Activated naive CD4-positive, alpha-beta T cell treated with anti-CD3 and anti-CD28 coated beads for 36 hours (primary cell): ENCODE measurements at regions of chrX and their contacts with region 1.

Region 1: GRCh38 chrX:124018023-124018422 is 56.5 kb downstream of the STAG2 start:
- DNase-seq: no peak
- H3K4me3 Mint-ChIP-seq: no peak overlapping the region
- H3K27ac Mint-ChIP-seq: no peak overlapping the region
- H3K4me1 Mint-ChIP-seq: peaks cover 30% of the 10 kb centered on the region
- H3K27me3 Mint-ChIP-seq: no peaks in the 10 kb centered on the region

Region 2: DNA sequence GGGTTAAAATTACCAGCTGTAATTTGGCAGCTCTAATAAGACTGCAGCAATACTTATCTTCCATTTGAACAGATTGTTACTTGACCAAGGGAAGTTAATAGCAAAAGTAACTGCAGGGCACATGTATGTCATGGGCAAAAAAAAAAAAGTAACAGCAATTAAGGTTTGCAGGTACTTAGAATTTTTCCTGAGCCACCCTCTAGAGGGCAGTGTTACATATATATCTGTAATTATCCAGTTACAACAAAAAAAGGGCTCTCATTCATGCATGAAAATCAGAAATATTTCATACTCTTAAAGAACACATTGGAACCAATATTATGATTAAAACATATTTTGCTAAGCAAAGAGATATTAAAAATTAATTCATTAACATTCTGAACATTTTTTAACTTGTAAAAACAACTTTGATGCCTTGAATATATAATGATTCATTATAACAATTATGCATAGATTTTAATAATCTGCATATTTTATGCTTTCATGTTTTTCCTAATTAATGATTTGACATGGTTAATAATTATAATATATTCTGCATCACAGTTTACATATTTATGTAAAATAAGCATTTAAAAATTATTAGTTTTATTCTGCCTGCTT is 133.1 kb before region 1 on chrX:
- CTCF ChIA-PET with region 1: no interaction called
- intact Hi-C with region 1: loop called (anchors 10 kb)
- DNase-seq: peak; percentile 42
- H3K4me3 Mint-ChIP-seq: no peak overlapping the region
- H3K27ac Mint-ChIP-seq: no peak overlapping the region
- H3K4me1 Mint-ChIP-seq: peaks cover 8% of the 10 kb centered on the region
- H3K27me3 Mint-ChIP-seq: no peaks in the 10 kb centered on the region

Region 3: DNA sequence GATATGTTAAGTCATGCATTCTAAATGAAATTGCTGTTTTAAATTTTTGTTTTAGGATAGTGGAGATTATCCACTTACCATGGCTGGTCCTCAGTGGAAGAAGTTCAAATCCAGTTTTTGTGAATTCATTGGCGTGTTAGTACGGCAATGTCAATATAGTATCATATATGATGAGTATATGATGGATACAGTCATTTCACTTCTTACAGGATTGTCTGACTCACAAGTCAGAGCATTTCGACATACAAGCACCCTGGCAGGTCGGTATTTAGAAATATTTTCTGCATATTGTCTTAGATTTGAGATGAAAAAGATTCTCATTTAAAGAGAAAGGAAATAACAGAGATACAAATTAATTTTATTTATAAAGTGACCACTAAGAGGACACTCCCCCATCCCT is 27.1 kb after region 1 on chrX:
- CTCF ChIA-PET with region 1: no interaction called
- intact Hi-C with region 1: no loop called
- DNase-seq: no peak
- H3K4me3 Mint-ChIP-seq: no peak overlapping the region
- H3K27ac Mint-ChIP-seq: no peak overlapping the region
- H3K4me1 Mint-ChIP-seq: peaks cover 13% of the 10 kb centered on the region
- H3K27me3 Mint-ChIP-seq: no peaks in the 10 kb centered on the region